ENCODE measurements at regions of chr2 and their contacts with region 1.

Region 1: GRCh38 chr2:68423966-68424650 is 43.0 kb downstream of the FBXO48 start:
- DNase-seq: peak; percentile 66
- CTCF ChIP-seq: no peak

Region 2: DNA sequence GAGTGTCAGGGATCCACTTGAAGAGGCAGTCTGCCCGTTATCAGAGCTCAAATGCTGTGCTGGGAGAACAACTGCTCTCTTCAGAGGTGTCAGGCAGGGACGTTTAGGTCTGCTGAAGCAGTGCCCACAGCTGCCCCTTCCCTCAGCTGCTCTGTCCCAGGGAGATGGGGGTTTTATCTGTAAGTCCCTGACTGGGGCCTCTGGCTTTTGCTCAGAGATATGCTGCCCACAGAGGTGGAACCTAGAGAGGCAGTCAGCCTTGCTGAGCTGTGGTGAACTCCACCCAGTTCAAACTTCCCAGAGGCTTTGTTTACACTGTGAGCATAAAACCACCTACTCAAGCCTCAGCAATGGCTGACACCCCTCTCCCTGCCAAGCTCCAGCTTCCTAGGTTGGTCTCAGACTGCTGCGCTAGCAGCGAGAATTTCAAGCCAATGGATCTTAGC is 20.9 kb before region 1 on chr2:
- CTCF ChIA-PET with region 1: interaction called, 12 read pairs
- POLR2A ChIA-PET with region 1: no interaction called
- DNase-seq: no peak
- CTCF ChIP-seq: no peak

Region 3: GRCh38 chr2:68411397-68412126 is 12.5 kb before region 1 on chr2:
- CTCF ChIA-PET with region 1: interaction called, 16 read pairs
- POLR2A ChIA-PET with region 1: no interaction called
- DNase-seq: no peak
- CTCF ChIP-seq: no peak

Measured in GM10248 (cell line).